Right ventricle myocardium superior (tissue), 1 donor: ENCODE measurements at regions of chr11 and their contacts with region 1.

Region 1: DNA sequence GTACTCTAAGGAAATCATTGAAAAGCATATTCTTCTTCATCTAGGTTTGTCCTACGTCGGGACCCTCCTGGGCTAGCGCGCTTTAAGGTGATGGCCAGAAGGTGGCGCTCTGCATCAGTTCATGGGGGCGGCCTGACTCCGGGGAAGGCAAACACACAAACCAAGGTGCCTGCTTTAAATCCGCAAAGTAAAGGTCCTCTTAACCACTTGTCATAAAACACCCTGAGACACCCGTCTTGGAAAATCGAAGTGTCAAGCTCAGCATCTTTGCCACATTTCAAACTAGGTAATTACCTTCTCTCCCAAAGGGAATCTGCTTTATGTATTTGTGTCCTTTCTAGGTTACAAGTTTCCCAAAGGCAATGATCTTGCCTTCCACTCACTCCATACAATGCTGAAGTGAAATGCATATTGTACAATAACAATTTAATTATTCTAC is 33.9 kb downstream of the LMO2 start:
- DNase-seq: peak; percentile 84
- ATAC-seq: peak; percentile 96

Region 2: GRCh38 chr11:33885338-33886005 is 27.5 kb after region 1 on chr11:
- intact Hi-C with region 1: no loop called
- DNase-seq: no peak
- ATAC-seq: no peak

Region 3: DNA sequence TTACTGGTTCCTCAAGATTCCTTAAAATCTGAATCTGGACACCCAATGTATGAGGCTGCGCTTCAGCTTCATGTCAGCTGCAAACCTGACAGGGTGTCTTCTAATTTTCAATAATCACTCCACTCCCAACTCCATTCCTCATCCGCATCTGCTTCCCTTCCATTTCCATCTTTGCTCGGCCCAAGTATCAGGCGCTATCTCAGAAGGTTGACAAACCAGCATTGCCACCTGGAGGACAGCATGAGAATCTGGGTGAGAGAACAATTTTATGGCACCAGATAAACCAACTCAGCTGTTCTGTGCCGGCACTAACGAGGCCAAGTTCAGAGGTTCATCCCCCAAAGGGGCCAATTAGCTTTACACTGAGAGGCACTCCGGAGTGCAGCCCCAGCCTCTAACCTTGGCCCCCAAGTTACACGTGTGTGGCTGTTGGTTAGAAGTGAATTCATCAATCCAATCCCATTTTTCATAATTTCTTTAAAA is 113.1 kb after region 1 on chr11:
- intact Hi-C with region 1: loop called (anchors 2 kb)
- DNase-seq: no peak
- ATAC-seq: peak; percentile 86

Region 4: DNA sequence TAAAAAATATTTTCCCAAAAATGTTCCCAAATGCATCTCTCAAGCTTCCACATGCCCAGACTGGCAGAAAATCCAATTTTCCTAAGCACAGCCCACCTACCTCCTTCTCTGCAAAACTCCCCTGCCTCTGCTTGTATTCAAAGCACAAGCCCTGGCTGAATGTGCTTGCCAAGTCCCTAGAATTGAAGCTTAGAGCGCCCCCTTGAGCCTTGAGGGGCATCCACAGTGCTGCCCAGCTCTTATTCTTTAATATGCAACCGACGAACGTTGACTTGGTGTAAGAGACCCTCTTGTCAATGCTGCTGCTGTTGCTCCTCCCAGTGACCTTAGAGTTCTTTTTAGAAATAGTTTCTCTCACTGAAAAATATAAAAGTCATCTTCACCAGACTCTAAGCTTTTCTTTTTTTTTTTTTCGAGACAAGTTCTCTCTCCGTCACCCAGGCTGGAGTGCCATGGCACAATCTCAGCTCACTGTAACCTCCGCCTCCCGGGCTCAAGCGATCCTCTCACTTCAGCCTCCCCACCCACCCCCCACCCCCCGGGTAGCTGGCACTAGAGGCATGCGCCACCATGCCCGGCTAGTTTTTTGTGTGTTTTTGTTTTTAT is 130.1 kb after region 1 on chr11:
- intact Hi-C with region 1: loop called (anchors 5 kb)
- DNase-seq: peak; percentile 72
- ATAC-seq: peak; percentile 92